Naive thymus-derived CD8-positive, alpha-beta T cell (primary cell): ENCODE measurements at regions of chr9 and their contacts with region 1.

Region 1: DNA sequence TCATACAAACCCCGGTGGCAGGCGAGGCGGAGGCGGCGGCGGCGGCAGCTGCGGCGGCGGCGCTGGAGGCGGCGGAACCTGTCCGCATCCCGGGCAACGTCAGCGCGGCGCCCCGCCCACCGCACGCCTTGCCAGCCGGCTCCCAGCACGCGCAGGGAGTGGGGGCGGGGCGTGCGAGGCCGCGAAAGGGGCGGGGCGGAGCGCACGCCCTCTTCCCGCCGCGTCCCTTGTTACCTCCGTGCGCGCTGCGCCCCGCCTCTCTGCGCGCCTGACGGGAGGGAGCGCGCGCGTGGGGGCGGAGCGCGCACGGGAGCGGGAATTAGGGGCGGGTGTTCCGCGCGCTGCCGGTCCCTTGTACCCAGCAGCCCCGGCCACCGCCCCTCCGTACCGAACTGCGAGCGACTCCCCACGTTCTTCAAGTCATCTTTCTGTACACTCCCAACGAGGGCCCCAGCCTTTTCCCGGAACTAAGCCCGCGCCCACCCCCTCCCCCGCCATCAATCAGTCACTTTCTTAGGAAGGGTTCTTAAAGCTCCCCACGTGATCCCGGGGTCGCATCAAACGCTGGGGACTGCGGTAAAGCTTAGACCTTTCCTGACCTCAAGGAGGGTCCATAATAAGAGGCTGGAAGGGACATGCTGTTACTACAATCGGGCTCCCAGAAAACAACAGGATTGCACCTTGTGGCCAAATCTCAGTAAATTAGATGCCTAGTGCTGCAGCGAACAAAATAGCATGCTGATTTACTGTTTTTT is at the start of gene AGTPBP1:
- DNase-seq: peak; percentile 91 to 100 (median 97)
- ATAC-seq: peak; percentile 78 to 80
- H3K4me3 Mint-ChIP-seq: peak within 1 kb of the TSS; percentile 85 to 99 (median 93)
- H3K27ac Mint-ChIP-seq: peak within 1 kb of the TSS; percentile 89 to 99 (median 97)
- H3K4me1 Mint-ChIP-seq: peaks cover 6 to 55% (median 36%) of the 10 kb centered on the region in 4 donors
- H3K27me3 Mint-ChIP-seq: no peaks in the 10 kb centered on the region
- polyA plus RNA-seq, gene AGTPBP1: 24.8 to 46.3 (median 25.0) TPM

Region 2: GRCh38 chr9:85610074-85610860 is 131.8 kb before region 1 on chr9:
- POLR2A ChIA-PET with region 1: no interaction called
- DNase-seq: peak in 9 of 10 donors; percentile 22 to 75 (median 47)
- ATAC-seq: peak; percentile 89
- H3K4me3 Mint-ChIP-seq: peak overlapping the region in 8 of 10 donors; percentile 15 to 69 (median 40)
- H3K27ac Mint-ChIP-seq: peak overlapping the region; percentile 37 to 93 (median 58)
- H3K4me1 Mint-ChIP-seq: peaks cover 2 to 21% (median 15%) of the 10 kb centered on the region in 4 donors
- H3K27me3 Mint-ChIP-seq: no peaks in the 10 kb centered on the region

Region 3: DNA sequence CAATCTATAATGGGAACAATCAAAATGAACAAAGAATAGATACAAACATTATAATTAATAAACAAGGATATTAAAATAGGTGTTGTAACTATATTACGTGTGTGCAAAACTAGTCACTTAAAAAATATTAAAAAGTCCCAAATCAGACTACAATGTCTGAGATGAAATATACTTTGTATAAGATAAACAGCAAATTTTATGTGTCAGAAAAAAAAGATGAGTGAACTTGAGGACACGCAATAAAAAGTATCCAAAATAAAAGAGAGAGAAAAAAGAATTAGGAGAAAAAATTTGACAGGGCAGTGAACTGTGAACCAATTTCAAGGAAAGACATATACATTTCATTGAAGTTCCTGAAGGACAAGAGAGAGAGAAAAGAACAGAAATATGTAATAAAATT is 37.3 kb before region 1 on chr9:
- POLR2A ChIA-PET with region 1: no interaction called
- DNase-seq: no peak
- ATAC-seq: no peak
- H3K4me3 Mint-ChIP-seq: no peak overlapping the region
- H3K27ac Mint-ChIP-seq: peak overlapping the region in 2 of 10 donors; percentile 8 to 29
- H3K4me1 Mint-ChIP-seq: peaks cover 26 to 58% (median 49%) of the 10 kb centered on the region in 4 donors
- H3K27me3 Mint-ChIP-seq: no peaks in the 10 kb centered on the region

Region 4: GRCh38 chr9:85723215-85723614 is 18.8 kb before region 1 on chr9:
- POLR2A ChIA-PET with region 1: interaction called, 45 read pairs
- DNase-seq: peak; percentile 38 to 91 (median 73)
- ATAC-seq: peak; percentile 91 to 92
- H3K4me3 Mint-ChIP-seq: peak overlapping the region; percentile 31 to 80 (median 70)
- H3K27ac Mint-ChIP-seq: peak overlapping the region; percentile 82 to 95 (median 93)
- H3K4me1 Mint-ChIP-seq: peaks cover 28 to 88% (median 63%) of the 10 kb centered on the region in 4 donors
- H3K27me3 Mint-ChIP-seq: no peaks in the 10 kb centered on the region